ENCODE measurements at regions of chr13 and their contacts with region 1.

Region 1: DNA sequence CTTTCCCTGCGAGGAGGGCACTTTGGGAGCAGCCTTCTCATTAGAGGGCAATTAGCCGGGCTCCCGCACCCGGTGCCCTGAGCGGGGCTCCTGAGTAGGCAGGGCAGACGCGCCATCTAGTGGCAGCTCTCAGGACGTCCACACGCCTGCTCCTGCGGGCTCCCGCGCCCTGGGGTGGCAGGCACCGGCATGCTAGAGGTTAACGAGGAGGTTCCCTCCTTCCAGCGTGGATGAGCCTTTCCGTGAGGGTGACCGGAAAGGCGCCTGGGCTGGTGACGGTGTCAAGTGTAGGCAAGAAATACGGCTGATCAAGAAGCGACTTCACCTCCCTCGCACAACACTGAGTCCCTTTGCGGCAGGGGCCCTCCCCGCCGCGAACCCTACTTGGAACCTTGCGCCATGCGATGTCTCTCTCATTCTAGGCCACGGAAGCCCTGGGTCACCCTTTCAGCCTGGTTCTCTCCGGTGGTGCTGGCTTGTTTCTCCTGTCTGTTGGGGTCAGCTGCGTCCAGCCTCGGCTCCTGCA is 67.7 kb downstream of the ALOX5AP start:
- DNase-seq: peak; percentile 88
- ATAC-seq: peak; percentile 93
- H3K4me3 Mint-ChIP-seq: peak overlapping the region; percentile 49
- H3K27ac Mint-ChIP-seq: no peak overlapping the region
- H3K4me1 Mint-ChIP-seq: peaks cover 16% of the 10 kb centered on the region
- H3K27me3 Mint-ChIP-seq: peaks cover 12% of the 10 kb centered on the region; the same call in 1 of the 2 replicates
- CTCF ChIP-seq: peak; percentile 88

Region 2: DNA sequence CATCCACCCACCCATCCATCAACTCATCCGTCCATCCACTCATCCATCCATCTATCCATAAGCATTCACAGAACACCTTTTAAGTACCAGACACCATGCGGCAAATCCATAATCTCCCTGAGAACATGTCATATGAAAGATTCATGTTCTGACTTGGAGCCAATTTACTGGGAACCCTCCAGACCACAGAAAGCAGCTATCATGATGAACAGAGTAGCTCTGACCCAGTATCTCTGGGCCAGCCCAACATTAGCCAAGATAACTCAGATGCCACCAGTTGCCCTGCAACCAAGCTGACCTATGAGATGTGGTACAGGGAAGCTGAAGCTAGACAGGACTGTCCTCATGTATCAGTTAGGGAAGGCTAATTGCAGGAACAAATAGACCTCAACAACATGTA is 16.4 kb before region 1 on chr13:
- CTCF ChIA-PET with region 1: no interaction called
- POLR2A ChIA-PET with region 1: no interaction called
- DNase-seq: no peak
- ATAC-seq: no peak
- H3K4me3 Mint-ChIP-seq: no peak overlapping the region
- H3K27ac Mint-ChIP-seq: no peak overlapping the region
- H3K4me1 Mint-ChIP-seq: no peaks in the 10 kb centered on the region
- H3K27me3 Mint-ChIP-seq: no peaks in the 10 kb centered on the region
- CTCF ChIP-seq: no peak

Region 3: GRCh38 chr13:30865123-30866049 is 62.4 kb after region 1 on chr13:
- CTCF ChIA-PET with region 1: interaction called, 22 read pairs
- POLR2A ChIA-PET with region 1: interaction called, 4 read pairs
- DNase-seq: peak; percentile 72
- ATAC-seq: peak; percentile 59
- H3K4me3 Mint-ChIP-seq: peak overlapping the region; percentile 69
- H3K27ac Mint-ChIP-seq: peak overlapping the region; percentile 78
- H3K4me1 Mint-ChIP-seq: peaks cover 54% of the 10 kb centered on the region
- H3K27me3 Mint-ChIP-seq: peaks cover 25% of the 10 kb centered on the region
- CTCF ChIP-seq: peak; percentile 81

Measured in WTC11 (cell line).